ACHN (cell line): ENCODE measurements at regions of chrX and their contacts with region 1.

Region 1: GRCh38 chrX:107537815-107538214 is 88.4 kb downstream of the FRMPD3 start:
- DNase-seq: peak; percentile 44

Region 2: GRCh38 chrX:107348051-107348450 is 189.8 kb before region 1 on chrX:
- in situ Hi-C with region 1: no loop called
- DNase-seq: no peak

Region 3: DNA sequence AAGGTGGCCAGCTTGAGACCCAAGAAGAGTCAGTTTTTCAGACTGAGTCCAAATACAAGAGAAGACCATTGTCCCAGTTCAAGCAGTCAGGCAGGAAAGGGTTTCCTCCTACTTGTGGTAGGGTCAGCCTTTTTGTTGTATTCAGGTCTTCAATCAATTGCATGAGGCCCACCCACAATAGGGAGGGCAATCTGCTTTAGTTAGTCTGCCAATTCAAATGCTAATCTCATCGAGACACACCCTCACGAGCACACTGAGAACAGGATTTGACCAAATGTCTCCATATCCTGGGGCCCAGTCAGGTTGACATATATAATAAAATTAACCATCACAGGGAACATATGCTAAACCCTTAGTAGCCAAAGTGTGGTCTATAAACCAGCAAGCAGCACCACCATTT is 163.7 kb before region 1 on chrX:
- in situ Hi-C with region 1: no loop called
- DNase-seq: no peak

Region 4: GRCh38 chrX:107627838-107628661 is 90.2 kb after region 1 on chrX and contains the start of gene PRPS1:
- in situ Hi-C with region 1: loop called (anchors 25 kb)
- DNase-seq: peak; percentile 89

Region 5: GRCh38 chrX:107716816-107717700 is 179.2 kb after region 1 on chrX:
- in situ Hi-C with region 1: no loop called
- DNase-seq: peak; percentile 34